ENCODE measurements at regions of chr2 and their contacts with region 1.

Region 1: DNA sequence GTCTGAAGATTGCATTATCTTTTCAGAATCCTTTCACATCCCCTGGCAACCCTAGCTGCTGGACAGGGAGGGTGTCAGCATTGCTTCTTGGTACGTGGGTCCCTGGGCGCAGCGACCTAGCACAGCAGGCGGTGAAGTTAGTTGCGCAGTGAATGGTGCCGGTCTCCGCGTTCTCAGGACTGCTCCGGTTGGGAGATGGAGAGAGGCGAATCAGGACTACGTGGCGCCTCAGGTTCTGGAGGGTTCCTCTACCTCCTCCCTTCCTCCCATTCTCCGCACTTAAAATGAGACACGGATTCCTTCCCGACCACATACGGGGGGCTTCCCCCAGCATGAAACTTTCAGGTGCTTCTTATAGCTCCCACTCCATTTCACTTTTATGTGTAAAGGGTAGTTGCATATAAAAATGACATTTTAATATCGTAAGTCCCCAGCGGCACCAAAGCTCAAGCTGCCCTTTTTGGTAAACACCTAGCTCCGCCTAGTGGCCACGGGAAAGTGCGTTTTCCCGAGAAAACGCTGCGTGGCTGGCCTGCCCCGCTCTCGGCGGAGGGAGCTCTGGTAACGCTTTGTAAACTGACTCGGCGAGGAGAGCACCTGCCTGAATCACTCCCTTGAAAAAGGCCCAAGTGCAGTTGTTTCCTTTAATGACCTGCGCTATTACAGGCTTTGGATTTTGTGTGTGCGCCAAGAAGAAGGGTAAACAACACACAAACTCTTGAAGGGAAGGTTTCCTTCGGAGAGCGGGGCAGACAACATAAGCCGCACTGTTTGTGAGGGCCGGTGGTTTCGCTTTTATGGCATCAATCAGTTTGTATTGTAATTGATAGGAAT is 32.9 kb upstream of the INHBB start:
- DNase-seq: peak; percentile 94
- H3K4me3 Mint-ChIP-seq: peak overlapping the region; percentile 80
- H3K27ac Mint-ChIP-seq: peak overlapping the region; percentile 65
- H3K4me1 Mint-ChIP-seq: peaks cover 41% of the 10 kb centered on the region
- H3K27me3 Mint-ChIP-seq: no peaks in the 10 kb centered on the region

Region 2: DNA sequence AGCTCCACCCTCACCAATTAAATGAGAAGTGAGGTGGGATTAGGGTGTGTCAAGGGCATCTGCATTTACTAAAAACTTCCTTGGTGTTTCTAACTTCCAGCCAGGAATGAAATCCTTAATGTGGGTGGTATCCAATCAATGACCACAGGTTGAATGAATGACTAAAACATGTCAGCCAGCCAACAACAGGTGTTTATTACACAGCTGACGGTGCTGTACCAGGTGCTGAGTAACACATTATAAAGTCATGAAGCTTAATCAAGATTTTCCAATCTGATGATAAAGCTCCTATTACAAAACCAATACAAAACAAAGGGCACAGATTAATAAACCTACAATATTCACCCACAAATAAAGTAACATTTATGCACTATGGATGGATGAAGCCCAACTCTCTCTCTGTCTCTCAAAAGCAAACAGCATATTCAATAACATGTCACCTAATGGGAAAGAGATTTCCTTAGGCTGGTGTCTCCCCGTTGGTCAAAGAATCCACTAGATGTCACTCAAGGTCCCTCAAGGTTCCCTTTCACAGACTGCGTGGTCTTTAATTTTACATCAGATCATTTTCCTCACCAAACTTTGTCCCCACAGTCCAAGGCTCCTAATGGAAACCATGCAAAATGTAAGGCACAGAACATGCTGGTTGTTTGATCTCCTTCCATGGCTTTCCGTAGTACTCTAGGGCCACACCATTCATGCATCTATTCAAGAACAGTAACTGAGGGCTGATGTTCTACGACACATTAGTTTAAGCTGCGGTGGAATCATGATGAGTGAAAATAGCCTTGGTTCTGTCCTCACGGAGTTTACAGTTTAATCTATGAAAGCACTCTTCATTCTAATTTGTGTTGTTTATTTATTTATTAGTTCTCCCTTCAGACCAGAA is 559.8 kb before region 1 on chr2:
- intact Hi-C with region 1: loop called (anchors 5 kb)
- DNase-seq: peak; percentile 81
- H3K4me3 Mint-ChIP-seq: no peak overlapping the region
- H3K27ac Mint-ChIP-seq: no peak overlapping the region
- H3K4me1 Mint-ChIP-seq: peaks cover 11% of the 10 kb centered on the region
- H3K27me3 Mint-ChIP-seq: peaks cover 18% of the 10 kb centered on the region

Region 3: DNA sequence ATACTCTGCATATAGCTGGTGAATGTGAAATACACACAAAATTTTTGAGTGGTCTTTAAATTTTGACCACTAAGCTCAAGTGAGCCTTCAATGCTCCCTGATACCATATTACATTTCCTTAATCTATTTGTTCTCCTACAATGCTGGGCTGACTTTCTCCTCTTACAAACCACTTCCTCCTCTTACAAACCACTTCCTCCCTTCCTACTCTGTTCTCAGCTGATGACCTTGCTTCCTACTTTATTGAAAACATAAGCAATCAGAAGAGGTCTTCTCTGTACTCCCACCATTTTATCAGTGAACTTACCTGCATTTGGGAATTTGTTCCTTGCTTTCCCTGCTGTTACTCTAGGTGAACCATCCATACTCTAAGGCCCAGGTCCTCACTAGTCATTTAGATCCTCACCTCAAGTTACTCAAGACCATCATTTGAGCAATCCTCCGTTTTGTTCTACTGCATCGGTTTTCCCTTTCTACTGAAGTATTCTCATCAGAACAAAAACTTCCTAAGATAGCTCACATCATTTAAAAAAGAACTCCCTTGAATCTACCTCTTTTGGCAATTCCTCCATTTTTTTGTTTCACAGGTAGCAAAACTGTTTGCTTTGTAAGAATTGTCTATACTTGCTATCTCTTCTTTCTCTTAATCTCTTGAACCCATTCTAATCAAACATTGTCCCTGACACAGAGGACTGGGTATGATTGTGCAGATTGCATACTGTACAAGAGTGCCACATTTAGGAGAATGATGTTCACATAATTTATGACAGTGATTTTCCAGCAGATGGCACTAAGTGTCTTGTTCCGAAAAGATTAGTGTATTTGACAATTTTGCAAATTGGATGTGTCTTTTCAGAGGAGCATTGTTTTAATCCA is 203.7 kb before region 1 on chr2:
- intact Hi-C with region 1: loop called (anchors 1 kb)
- DNase-seq: peak; percentile 76
- H3K4me3 Mint-ChIP-seq: peak overlapping the region; percentile 58
- H3K27ac Mint-ChIP-seq: peak overlapping the region; percentile 22
- H3K4me1 Mint-ChIP-seq: peaks cover 21% of the 10 kb centered on the region
- H3K27me3 Mint-ChIP-seq: peaks cover 26% of the 10 kb centered on the region

Region 4: DNA sequence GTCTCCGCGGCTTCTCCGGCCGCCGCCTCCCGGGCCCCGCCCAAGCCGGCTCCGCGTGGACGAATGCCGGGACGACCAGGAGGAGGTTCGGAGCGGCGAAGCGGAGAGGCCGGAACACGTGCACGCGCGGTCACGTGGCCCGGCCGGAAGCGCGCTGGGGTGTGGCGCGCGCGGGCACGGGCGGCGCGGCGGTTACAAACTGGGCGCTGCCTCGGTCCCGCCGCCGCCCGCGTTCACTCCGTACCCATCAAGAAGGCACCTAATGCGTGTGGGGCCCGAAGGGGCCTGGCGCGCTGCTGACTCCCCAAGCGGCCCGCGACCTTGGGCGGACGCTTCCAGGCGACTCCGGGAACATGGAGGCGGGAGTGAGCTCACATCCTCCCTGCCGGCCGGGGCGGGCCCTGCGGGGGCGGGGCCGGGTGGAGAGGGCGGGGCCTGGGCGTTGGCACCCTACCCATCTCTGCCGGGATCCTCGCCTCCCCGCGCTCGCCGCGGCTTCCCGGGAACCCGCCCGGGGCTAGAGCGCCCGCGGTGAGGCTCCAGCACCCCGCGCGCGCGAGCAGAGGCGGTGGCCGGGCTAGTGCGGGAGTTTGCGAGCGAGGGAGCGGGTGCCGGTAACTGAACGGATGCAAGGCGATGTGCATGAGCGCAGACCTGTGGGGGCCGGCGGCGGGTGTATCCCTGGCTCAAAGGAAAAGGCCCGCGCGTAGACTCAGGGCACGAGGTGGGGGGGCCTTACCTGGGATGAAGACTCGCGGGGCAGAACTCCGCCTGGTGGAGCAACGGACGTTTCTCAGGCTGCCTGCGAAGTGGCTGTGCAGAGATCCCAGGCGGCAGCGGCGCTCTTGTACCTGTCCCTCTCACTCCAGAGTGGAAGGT is 89.8 kb before region 1 on chr2 and contains the start of gene TMEM185B:
- intact Hi-C with region 1: loop called (anchors 1 kb)
- DNase-seq: peak; percentile 98
- H3K4me3 Mint-ChIP-seq: peak within 1 kb of the TSS; percentile 87
- H3K27ac Mint-ChIP-seq: peak within 1 kb of the TSS; percentile 92
- H3K4me1 Mint-ChIP-seq: peaks cover 59% of the 10 kb centered on the region
- H3K27me3 Mint-ChIP-seq: no peaks in the 10 kb centered on the region
- total RNA-seq, gene TMEM185B: 44.3 and 45.8 TPM in 2 replicates

Region 5: DNA sequence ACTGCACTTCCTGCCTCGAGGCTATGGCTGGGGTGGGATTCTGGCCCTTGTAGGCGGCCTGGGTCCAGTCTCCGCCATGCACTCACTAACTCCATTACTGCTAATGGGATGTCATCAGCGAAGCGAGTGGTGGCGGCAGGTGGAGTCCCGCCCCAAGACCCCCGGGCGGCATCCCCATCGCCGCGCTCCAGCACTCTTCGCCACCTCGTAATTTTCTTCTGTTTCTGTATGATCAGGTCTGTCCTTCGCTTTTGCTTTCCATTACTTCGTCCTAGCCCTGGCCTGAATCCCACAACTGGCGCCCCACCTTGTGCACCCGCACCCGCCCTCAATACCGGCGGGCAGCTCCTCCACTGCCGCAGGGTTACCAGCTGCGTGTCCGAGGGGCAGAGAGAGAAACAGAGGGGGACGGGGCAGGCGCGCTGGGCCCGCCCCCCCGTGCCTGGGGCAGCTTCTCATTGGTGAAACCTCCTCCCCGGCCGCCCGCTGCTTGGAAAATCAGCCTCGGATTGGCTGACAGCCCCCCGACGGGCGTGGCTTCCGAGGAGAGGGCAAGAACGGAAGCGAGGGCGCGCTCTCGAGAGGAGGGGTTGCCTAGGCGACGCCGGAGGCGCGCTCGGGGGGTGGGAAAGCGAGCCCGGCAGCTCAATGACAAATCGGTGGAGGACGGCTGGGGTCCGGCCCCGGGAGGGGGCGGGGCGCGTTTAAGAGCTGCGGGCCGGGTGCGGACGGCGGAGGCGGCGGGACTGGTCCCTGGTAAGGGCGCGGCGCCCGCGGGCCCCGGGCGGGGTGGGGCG is 60.7 kb before region 1 on chr2 and contains the start of gene RALB:
- intact Hi-C with region 1: loop called (anchors 1 kb)
- DNase-seq: peak; percentile 100
- H3K4me3 Mint-ChIP-seq: peak within 1 kb of the TSS; percentile 99
- H3K27ac Mint-ChIP-seq: peak within 1 kb of the TSS; percentile 96
- H3K4me1 Mint-ChIP-seq: peaks cover 70% of the 10 kb centered on the region
- H3K27me3 Mint-ChIP-seq: peaks cover 4% of the 10 kb centered on the region
- total RNA-seq, gene RALB: 72.1 and 80.0 TPM in 2 replicates

Region 6: DNA sequence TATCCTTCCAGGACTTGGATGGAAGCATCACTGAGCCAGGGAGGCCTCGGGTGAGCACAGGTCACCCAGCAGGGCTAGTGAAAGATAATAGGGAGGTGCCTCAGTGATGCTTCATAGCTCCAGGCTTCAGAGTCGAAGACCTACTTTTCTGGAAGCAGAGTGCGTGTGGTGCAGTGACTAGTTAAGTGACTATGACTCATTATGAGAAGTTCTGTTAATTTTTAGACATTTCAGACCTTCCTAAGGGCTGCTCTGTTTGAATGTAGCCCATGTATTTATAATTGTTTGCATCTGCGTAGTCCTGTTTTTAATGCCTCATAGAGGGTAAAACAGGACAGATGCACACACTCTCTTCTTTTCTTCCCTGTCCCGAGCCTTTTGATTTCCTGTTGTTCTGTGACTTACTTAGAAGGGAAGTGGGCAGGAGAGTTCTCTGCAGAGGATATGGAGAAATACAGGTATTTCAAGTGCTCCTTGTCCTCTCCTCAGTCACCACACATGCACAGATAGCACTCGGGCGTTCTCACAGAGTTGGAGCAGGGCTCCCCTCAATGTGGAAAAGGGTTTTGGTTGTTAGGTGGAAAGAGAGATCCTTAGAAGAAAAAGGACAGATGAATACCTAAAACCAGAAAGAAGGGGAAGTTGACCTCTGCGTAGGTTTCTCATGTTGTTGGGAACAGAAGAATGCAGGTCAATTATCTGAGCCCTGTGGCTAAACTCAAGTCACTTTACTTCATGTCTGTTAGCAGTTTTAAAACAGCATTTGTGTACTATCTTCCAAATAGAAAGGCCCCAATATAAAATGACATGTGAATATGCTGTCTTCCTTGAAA is 25.7 kb before region 1 on chr2:
- intact Hi-C with region 1: loop called (anchors 2 kb)
- DNase-seq: peak; percentile 73
- H3K4me3 Mint-ChIP-seq: peak overlapping the region; percentile 66
- H3K27ac Mint-ChIP-seq: peak overlapping the region; percentile 89
- H3K4me1 Mint-ChIP-seq: peaks cover 63% of the 10 kb centered on the region
- H3K27me3 Mint-ChIP-seq: no peaks in the 10 kb centered on the region